Endothelial cell of umbilical vein (primary cell): ENCODE measurements at regions of chr14 and their contacts with region 1.

Region 1: DNA sequence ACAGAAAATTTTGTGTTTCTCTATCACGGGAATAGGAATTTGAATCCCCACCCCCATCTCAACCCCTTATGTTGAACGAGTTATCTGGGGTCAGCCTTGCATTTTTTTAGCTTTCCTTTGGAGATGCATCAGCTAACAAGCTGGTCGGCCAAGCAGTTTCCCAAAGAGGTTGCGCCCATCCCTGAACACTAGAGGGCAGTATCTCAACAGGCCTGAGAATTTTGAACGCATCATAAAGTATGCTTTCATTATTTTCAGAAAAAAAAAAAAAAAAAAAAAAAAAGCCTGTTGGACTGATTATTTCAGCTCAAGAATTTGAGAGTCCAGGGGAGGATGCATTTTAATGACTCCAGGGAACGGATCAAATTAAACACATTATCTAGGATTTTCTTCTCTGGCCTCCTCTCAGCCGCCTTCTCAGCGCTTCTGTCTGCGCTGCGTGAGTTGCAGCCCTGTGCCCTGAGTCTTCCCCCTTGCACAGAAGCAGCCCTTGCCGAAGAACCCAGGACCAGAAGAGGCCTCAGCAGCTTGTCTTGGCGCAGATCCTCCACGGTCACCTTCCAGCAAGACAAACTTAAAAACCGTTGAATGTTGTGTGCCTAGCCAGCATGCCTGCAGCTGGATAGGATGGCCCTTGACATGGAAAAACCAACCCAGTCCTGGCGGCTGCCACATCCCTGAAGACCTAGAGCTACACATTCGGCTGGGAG is 76.6 kb upstream of the GZMB start:
- DNase-seq: peak; percentile 48
- H3K4me3 ChIP-seq: no peak overlapping the region
- H3K27ac ChIP-seq: no peak overlapping the region
- H3K4me1 ChIP-seq: no peaks in the 10 kb centered on the region
- H3K27me3 ChIP-seq: no peaks in the 10 kb centered on the region
- CTCF ChIP-seq: peak; percentile 67 to 85
- POLR2A ChIP-seq: no peak

Region 2: GRCh38 chr14:25132732-25133422 is 422.3 kb after region 1 on chr14:
- CTCF ChIA-PET with region 1: interaction called, 62 read pairs
- POLR2A ChIA-PET with region 1: no interaction called
- dilution Hi-C with region 1: no loop called
- intact Hi-C with region 1: loop called (anchors 1 kb)
- DNase-seq: peak; percentile 39
- H3K4me3 ChIP-seq: no peak overlapping the region
- H3K27ac ChIP-seq: no peak overlapping the region
- H3K4me1 ChIP-seq: no peaks in the 10 kb centered on the region
- H3K27me3 ChIP-seq: peaks cover 0 to 4% of the 10 kb centered on the region in 2 experiments
- CTCF ChIP-seq: peak; percentile 74 to 81
- POLR2A ChIP-seq: no peak

Region 3: GRCh38 chr14:25150934-25151790 is 440.6 kb after region 1 on chr14:
- CTCF ChIA-PET with region 1: interaction called, 18 read pairs
- POLR2A ChIA-PET with region 1: no interaction called
- dilution Hi-C with region 1: no loop called
- intact Hi-C with region 1: loop called (anchors 1 kb)
- DNase-seq: peak; percentile 43
- H3K4me3 ChIP-seq: no peak overlapping the region
- H3K27ac ChIP-seq: no peak overlapping the region
- H3K4me1 ChIP-seq: no peaks in the 10 kb centered on the region
- H3K27me3 ChIP-seq: no peaks in the 10 kb centered on the region
- CTCF ChIP-seq: peak; percentile 42 to 49
- POLR2A ChIP-seq: no peak